Activated B cell treated with CpG ODN at 0.5 μM for 24 hours (primary cell): ENCODE measurements at regions of chr2 and their contacts with region 1.

Region 1: DNA sequence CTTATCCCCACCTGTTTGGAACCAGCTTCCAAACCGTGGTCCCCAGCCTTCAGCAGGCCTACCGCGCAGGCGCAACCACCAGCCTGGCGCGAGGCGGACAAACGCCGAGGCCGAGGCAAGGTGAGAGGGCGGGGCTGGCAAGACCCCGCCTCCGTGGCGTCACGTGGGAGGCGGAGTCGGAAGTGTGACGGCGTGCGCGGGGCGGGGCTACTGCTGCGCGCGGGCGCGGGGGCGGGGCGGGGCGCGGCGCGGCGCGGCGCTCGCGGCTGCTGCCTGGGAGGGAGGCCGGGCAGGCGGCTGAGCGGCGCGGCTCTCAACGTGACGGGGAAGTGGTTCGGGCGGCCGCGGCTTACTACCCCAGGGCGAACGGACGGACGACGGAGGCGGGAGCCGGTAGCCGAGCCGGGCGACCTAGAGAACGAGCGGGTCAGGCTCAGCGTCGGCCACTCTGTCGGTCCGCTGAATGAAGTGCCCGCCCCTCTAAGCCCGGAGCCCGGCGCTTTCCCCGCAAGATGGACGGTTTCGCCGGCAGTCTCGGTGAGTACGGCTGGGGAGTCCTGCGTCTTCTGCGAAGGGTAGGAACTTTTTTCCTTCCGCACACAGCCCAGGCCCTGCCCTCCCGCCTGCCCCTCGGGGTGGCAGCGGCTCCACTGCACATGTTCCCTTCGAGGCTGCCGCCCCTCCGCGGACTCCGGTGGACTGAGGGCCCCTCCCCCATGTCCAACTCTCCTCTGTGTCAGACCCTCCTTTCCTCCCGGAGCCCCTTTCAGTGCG is at the start of gene EML4:
- DNase-seq: peak; percentile 97
- ATAC-seq: peak; percentile 88
- H3K4me3 Mint-ChIP-seq: no peak within 1 kb of the TSS
- H3K27ac Mint-ChIP-seq: no peak within 1 kb of the TSS
- H3K4me1 Mint-ChIP-seq: peaks cover 26% of the 10 kb centered on the region
- H3K27me3 Mint-ChIP-seq: no peaks in the 10 kb centered on the region
- CTCF ChIP-seq: no peak
- total RNA-seq, gene EML4: 83.2 and 95.8 TPM in 2 replicates

Region 2: DNA sequence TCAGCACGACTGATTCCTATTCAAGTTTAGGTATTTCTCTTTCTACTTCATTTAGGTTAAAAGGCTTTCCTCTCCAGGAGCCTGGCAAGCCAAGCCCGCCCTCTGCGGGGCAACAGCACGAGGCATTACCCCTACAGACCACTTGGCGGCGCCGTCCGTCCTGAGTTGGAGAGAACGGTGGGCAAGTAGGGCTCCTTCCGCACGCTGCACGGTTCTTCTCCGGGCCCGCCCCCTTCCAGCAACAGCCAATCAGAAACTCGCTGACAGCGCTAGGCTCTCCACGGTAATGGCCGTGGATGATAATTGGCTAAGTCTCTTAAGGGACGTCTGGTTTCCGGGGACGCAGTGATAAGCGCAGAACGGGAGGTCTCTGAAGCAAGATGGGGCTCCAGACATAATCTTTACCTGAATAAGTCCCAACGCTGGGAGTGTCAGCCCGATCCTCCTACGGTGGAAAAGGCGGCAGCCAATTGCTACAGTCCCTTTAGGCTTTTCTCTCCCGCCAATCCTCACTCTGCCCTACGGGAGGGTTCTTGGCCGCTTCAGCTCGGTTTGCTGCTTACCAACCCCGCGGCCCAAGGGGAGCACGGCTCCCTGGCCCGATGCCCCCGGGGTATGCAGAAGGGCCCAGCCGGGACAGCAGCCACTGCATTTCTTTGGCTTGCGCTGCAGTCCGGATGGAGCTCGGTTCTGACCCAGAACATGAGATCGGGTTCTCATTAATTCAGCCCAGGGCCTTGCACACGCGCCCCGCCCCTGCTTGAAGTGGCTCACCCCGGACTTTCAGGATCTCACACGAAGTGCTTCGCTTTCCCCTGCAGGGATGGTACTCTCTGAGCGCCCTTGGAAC is 328.4 kb before region 1 on chr2:
- CTCF ChIA-PET with region 1: no interaction called
- POLR2A ChIA-PET with region 1: no interaction called
- intact Hi-C with region 1: loop called (anchors 1 kb)
- DNase-seq: peak; percentile 88
- ATAC-seq: peak; percentile 98
- H3K4me3 Mint-ChIP-seq: peak overlapping the region; percentile 89
- H3K27ac Mint-ChIP-seq: peak overlapping the region; percentile 82
- H3K4me1 Mint-ChIP-seq: peaks cover 13% of the 10 kb centered on the region
- H3K27me3 Mint-ChIP-seq: peaks cover 24% of the 10 kb centered on the region
- CTCF ChIP-seq: peak; percentile 78

Region 3: DNA sequence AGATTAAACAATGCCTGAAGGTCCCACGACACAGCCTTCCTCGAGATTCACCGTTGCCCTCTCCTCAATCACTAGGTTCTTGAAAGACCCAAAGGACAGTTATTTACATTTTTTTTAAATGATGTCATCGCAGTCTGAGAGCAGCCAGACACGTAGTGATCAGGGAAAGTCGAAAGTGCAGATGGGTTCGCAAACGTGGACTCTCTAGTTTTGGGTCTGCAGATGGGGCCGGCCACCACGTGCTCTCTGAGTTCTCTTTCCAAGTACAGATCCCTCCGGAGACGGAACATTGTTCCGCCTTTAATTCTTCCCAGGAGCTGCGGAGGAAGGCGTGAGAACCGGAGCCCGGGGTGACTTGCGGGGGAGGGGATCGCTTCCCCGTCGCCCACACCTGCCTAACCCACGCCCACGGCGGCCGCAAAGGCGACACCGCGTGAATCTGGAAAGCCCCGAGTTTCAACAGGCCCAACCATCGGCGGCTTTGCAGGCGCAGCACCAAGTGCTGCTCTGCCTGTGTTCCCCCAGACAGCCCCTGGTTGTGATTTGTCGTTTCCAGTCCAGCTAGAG is 67.2 kb before region 1 on chr2:
- CTCF ChIA-PET with region 1: interaction called, 6 read pairs
- POLR2A ChIA-PET with region 1: interaction called, 62 read pairs
- intact Hi-C with region 1: loop called (anchors 1 kb)
- DNase-seq: peak; percentile 88
- ATAC-seq: peak; percentile 72
- H3K4me3 Mint-ChIP-seq: peak overlapping the region; percentile 88
- H3K27ac Mint-ChIP-seq: no peak overlapping the region
- H3K4me1 Mint-ChIP-seq: peaks cover 47% of the 10 kb centered on the region
- H3K27me3 Mint-ChIP-seq: no peaks in the 10 kb centered on the region
- CTCF ChIP-seq: no peak

Region 4: DNA sequence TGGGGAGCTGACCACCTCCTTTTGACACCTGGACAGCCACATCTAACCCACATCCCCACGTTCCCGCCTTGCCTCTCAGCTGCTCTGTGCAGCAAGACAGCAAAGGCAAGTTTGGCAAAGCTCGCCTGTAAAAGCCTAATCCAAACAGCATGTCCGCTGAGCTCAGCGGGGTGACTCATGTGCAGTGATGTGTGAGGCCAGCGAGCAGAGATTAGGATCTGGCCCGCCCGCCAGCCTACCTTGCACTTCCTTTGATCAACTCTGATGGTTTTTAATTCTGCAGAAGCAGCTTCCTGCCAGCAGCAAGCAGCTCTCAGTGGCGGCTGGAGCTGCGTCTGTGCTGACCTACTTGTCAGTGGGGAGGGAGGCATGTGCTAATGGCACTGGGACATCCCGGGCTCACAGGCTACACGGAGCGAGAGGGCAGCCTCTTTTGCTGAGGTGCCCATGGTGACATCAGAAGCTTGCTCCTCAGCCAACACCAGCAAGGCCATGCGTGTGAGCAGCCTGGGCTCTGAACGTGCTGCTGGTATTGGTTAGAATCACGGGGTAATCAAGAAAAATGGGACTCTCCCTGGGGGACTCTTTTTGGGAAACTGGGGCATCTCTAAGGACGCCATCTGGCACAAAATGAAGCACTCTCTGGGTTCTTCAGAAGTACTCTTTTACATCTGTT is 36.2 kb before region 1 on chr2:
- CTCF ChIA-PET with region 1: interaction called, 7 read pairs
- POLR2A ChIA-PET with region 1: interaction called, 8 read pairs
- intact Hi-C with region 1: loop called (anchors 1 kb)
- DNase-seq: peak; percentile 57
- ATAC-seq: peak; percentile 93
- H3K4me3 Mint-ChIP-seq: peak overlapping the region; percentile 80
- H3K27ac Mint-ChIP-seq: peak overlapping the region; percentile 89
- H3K4me1 Mint-ChIP-seq: peaks cover 80% of the 10 kb centered on the region
- H3K27me3 Mint-ChIP-seq: no peaks in the 10 kb centered on the region
- CTCF ChIP-seq: no peak

Region 5: DNA sequence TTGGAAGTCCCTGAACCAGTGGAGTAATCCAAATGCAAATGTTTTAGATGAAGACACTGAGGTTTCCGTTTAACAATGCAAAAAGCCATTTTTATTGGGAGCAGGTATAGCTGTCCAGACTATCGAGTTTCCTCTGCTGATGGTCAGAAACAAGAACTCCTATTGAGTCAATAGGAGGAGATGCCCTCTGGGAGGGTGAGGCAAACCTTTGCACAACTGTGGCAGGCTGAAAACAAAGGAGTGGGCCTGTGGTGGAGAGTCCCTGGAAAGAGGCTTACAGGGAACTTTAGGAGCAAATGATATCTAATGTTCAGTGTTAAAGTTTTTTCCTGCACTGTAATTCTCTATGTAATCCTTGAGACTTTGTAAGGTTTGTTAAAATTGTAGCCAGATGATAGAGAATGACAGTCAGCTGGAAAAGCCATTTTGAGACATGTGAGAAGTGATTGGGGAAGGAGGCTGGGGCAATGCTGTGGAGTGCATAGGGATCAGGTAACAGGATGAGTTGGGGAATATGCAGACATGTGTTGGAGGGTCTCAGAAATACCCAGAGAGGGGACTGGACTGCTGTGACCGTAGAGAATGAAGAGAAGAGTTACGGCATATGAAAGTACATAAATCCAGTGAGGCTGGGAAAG is 15.2 kb before region 1 on chr2:
- CTCF ChIA-PET with region 1: no interaction called
- POLR2A ChIA-PET with region 1: no interaction called
- intact Hi-C with region 1: loop called (anchors 1 kb)
- DNase-seq: no peak
- ATAC-seq: no peak
- H3K4me3 Mint-ChIP-seq: no peak overlapping the region
- H3K27ac Mint-ChIP-seq: no peak overlapping the region
- H3K4me1 Mint-ChIP-seq: no peaks in the 10 kb centered on the region
- H3K27me3 Mint-ChIP-seq: no peaks in the 10 kb centered on the region
- CTCF ChIP-seq: no peak

Region 6: GRCh38 chr2:43874776-43875451 is 1705.6 kb after region 1 on chr2:
- CTCF ChIA-PET with region 1: no interaction called
- POLR2A ChIA-PET with region 1: no interaction called
- intact Hi-C with region 1: no loop called
- DNase-seq: no peak
- ATAC-seq: no peak
- H3K4me3 Mint-ChIP-seq: no peak overlapping the region
- H3K27ac Mint-ChIP-seq: no peak overlapping the region
- H3K4me1 Mint-ChIP-seq: peaks cover 6% of the 10 kb centered on the region
- H3K27me3 Mint-ChIP-seq: peaks cover 14% of the 10 kb centered on the region
- CTCF ChIP-seq: no peak